ENCODE measurements at regions of chr17 and their contacts with region 1.

Region 1: GRCh38 chr17:41738077-41738735 is 3.8 kb upstream of the HAP1 start:
- DNase-seq: peak; percentile 89
- H3K4me3 ChIP-seq: no peak overlapping the region
- H3K27ac ChIP-seq: no peak overlapping the region
- H3K4me1 ChIP-seq: peaks cover 16% of the 10 kb centered on the region
- H3K27me3 ChIP-seq: no peaks in the 10 kb centered on the region
- CTCF ChIP-seq: peak; percentile 95 to 96 (median 96)
- POLR2A ChIP-seq: no peak

Region 2: GRCh38 chr17:41792845-41793783 is 54.9 kb after region 1 on chr17:
- intact Hi-C with region 1: loop called (anchors 10 kb)
- DNase-seq: peak; percentile 68
- H3K4me3 ChIP-seq: no peak overlapping the region
- H3K27ac ChIP-seq: peak overlapping the region; percentile 50 to 56
- H3K4me1 ChIP-seq: peaks cover 22% of the 10 kb centered on the region
- H3K27me3 ChIP-seq: no peaks in the 10 kb centered on the region
- CTCF ChIP-seq: no peak
- POLR2A ChIP-seq: no peak

Region 3: GRCh38 chr17:41918314-41919164 is 180.3 kb after region 1 on chr17 and contains the start of gene ACLY:
- intact Hi-C with region 1: no loop called
- DNase-seq: peak; percentile 97
- H3K4me3 ChIP-seq: peak within 1 kb of the TSS; percentile 82 to 90
- H3K27ac ChIP-seq: peak within 1 kb of the TSS; percentile 71 to 87
- H3K4me1 ChIP-seq: peaks cover 17% of the 10 kb centered on the region
- H3K27me3 ChIP-seq: no peaks in the 10 kb centered on the region
- CTCF ChIP-seq: no peak
- POLR2A ChIP-seq: peak; percentile 41
- total RNA-seq, gene ACLY: 68.4 to 86.0 TPM